CD8-positive, alpha-beta T cell (primary cell): ENCODE measurements at regions of chr20 and their contacts with region 1.

Region 1: GRCh38 chr20:32249030-32249738 is 28.3 kb upstream of the KIF3B start:
- DNase-seq: peak in 6 of 9 experiments; percentile 4 to 90 (median 51)
- ATAC-seq: peak; percentile 92
- H3K4me3 ChIP-seq: no peak overlapping the region
- H3K4me3 Mint-ChIP-seq: peak overlapping the region; percentile 3
- H3K27ac ChIP-seq: peak overlapping the region in 1 of 2 experiments; percentile 19
- H3K27ac Mint-ChIP-seq: peak overlapping the region; percentile 85
- H3K4me1 ChIP-seq: peaks cover 29% of the 10 kb centered on the region
- H3K4me1 Mint-ChIP-seq: peaks cover 25% of the 10 kb centered on the region
- H3K27me3 ChIP-seq: no peaks in the 10 kb centered on the region
- H3K27me3 Mint-ChIP-seq: no peaks in the 10 kb centered on the region
- CTCF ChIP-seq: no peak

Region 2: DNA sequence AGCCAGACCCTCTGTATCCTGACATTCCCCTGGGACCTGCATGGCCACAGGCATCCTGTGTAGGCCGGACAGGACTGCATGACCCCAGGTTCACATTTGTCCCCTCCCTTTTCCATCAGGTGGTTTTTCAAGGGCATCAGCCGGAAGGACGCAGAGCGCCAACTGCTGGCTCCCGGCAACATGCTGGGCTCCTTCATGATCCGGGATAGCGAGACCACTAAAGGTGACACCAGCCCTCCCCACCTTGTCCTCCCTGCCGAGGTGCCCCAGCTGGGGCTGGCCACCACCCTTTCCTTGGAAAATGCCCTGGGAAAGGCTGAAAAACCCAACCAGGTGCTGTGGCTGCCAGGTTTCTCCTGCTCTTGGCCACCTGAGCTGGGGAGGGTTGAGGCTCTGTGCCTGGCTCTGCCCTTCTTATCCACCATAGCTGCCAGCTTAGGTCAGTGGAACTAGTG is 169.5 kb before region 1 on chr20:
- CTCF ChIA-PET with region 1: no interaction called
- POLR2A ChIA-PET with region 1: no interaction called
- intact Hi-C with region 1: no loop called
- DNase-seq: no peak
- ATAC-seq: no peak
- H3K4me3 ChIP-seq: no peak overlapping the region
- H3K4me3 Mint-ChIP-seq: no peak overlapping the region
- H3K27ac ChIP-seq: no peak overlapping the region
- H3K27ac Mint-ChIP-seq: no peak overlapping the region
- H3K4me1 ChIP-seq: no peaks in the 10 kb centered on the region
- H3K4me1 Mint-ChIP-seq: no peaks in the 10 kb centered on the region
- H3K27me3 ChIP-seq: no peaks in the 10 kb centered on the region
- H3K27me3 Mint-ChIP-seq: peaks cover 23% of the 10 kb centered on the region
- CTCF ChIP-seq: no peak

Region 3: GRCh38 chr20:32207626-32208498 is 41.3 kb before region 1 on chr20 and contains the starts of genes PLAGL2 and POFUT1:
- CTCF ChIA-PET with region 1: no interaction called
- POLR2A ChIA-PET with region 1: no interaction called
- intact Hi-C with region 1: loop called in 1 of 2 experiments (anchors 2 kb)
- DNase-seq: peak; percentile 73 to 94 (median 86)
- ATAC-seq: peak; percentile 96
- H3K4me3 ChIP-seq: peak within 1 kb of the TSS; percentile 84 to 86
- H3K4me3 Mint-ChIP-seq: peak within 1 kb of the TSS; percentile 94
- H3K27ac ChIP-seq: peak within 1 kb of the TSS; percentile 68 to 70
- H3K27ac Mint-ChIP-seq: peak within 1 kb of the TSS; percentile 92
- H3K4me1 ChIP-seq: peaks cover 53% of the 10 kb centered on the region
- H3K4me1 Mint-ChIP-seq: peaks cover 82% of the 10 kb centered on the region
- H3K27me3 ChIP-seq: no peaks in the 10 kb centered on the region
- H3K27me3 Mint-ChIP-seq: no peaks in the 10 kb centered on the region
- CTCF ChIP-seq: no peak
- total RNA-seq, gene PLAGL2: 15.8 to 16.9 TPM
- total RNA-seq, gene POFUT1: 5.1 to 6.3 TPM

Region 4: DNA sequence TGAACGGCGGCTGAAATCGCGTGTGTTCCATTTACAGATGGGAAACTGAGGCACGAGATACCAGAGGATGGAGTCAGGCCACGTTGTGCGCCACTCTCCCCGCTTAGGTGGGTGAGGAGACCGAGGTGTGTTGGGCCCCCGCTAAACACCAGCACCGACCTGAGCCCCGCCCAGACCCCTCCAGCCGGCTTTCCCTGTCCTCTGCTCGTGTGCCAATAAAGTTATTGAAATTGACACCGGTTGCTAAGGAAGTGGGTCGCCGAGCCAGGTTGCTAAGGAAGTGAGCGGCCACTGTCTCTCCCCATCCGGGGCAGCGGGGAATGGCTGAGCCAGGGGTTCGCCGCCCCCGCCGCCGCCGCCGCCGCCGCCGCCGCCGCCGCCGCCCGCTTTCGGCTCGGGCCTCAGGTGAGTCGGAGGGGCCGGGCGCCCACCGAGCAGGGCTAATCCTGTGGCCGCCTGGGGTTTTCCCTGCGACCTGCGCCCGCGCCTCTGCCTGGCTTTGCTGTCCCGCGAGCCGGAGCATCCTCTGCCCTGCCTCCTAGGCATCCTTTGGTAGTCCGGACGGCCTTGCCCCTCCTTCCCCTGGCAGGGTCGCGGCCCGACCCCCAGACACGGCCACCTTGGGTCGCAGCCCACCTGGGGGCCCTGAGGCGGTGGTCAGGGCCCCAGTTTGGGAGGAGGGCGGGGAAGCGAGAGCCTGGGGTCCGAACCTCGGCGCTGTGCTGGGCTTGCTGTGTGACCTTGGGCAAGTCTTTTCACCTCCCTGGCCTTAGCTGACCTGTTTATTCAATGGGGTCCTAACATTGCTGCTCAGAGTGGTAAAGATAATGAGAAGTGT is 28.4 kb after region 1 on chr20 and contains the start of gene KIF3B:
- CTCF ChIA-PET with region 1: no interaction called
- POLR2A ChIA-PET with region 1: no interaction called
- intact Hi-C with region 1: loop called (anchors 1 to 2 kb)
- DNase-seq: peak; percentile 68 to 94 (median 87)
- ATAC-seq: peak; percentile 85
- H3K4me3 ChIP-seq: peak within 1 kb of the TSS; percentile 91 to 97
- H3K4me3 Mint-ChIP-seq: peak within 1 kb of the TSS; percentile 90
- H3K27ac ChIP-seq: peak within 1 kb of the TSS; percentile 64 to 86
- H3K27ac Mint-ChIP-seq: peak within 1 kb of the TSS; percentile 93
- H3K4me1 ChIP-seq: peaks cover 20% of the 10 kb centered on the region
- H3K4me1 Mint-ChIP-seq: peaks cover 44% of the 10 kb centered on the region
- H3K27me3 ChIP-seq: no peaks in the 10 kb centered on the region
- H3K27me3 Mint-ChIP-seq: no peaks in the 10 kb centered on the region
- CTCF ChIP-seq: no peak
- total RNA-seq, gene KIF3B: 7.1 to 8.1 TPM

Region 5: DNA sequence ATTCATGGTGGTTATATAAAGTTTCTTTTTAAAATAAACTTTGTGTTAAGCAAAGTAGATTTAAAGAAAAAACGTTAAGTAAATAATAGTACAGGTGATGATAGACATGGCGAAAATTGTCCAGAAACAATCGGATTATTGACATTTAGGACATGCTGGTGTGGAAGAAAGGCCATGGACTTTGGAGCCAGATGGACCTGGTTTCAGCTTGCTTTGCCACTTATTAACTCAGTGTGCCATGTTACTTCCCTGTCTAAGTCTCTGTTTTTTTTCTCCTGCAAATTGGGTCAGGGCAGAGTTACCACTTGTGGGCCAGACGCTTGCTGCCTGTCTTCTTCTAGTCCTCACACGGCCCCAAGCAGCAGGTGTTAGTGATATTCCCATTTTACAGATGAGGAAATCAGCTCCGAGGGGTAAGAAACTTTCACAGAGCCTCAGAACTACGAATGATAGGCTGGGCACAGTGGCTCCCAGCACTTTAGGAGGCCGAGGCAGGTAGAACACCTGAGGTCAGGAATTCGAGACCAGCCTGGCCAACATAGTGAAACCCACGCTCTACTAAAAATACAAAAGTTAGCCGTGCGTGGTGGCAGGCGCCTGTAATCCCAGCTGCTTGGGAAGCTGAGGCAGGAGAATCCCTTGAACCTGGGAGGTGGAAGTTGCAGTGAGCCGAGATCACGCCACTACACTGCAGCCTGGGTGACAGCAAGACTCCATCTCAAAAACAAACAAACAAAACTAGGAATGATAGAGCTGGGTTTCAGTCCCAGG is 40.7 kb after region 1 on chr20:
- CTCF ChIA-PET with region 1: no interaction called
- POLR2A ChIA-PET with region 1: no interaction called
- intact Hi-C with region 1: no loop called
- DNase-seq: no peak
- ATAC-seq: no peak
- H3K4me3 ChIP-seq: no peak overlapping the region
- H3K4me3 Mint-ChIP-seq: no peak overlapping the region
- H3K27ac ChIP-seq: no peak overlapping the region
- H3K27ac Mint-ChIP-seq: no peak overlapping the region
- H3K4me1 ChIP-seq: peaks cover 20% of the 10 kb centered on the region
- H3K4me1 Mint-ChIP-seq: peaks cover 29% of the 10 kb centered on the region
- H3K27me3 ChIP-seq: no peaks in the 10 kb centered on the region
- H3K27me3 Mint-ChIP-seq: no peaks in the 10 kb centered on the region
- CTCF ChIP-seq: no peak

Region 6: DNA sequence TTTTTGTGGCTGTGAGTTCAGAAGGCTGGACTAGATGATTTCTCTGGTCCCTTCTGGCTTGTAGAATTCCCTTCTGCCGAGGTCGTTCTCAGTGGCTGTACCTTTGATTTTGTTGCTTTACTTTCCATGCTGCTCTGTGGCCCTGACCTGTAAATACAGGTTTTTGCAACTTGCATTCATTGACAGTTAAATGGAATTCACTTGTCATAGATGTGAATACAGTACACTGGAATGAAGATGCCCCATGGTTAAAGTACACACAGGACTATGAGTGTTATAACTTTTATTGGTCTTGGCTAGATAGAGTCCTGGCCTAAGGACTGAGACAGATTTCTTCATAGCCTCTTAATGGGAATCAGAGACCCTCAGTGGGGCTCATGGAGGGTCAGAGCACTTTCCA is 596.6 kb after region 1 on chr20:
- CTCF ChIA-PET with region 1: no interaction called
- POLR2A ChIA-PET with region 1: no interaction called
- intact Hi-C with region 1: no loop called
- DNase-seq: no peak
- ATAC-seq: no peak
- H3K4me3 ChIP-seq: no peak overlapping the region
- H3K4me3 Mint-ChIP-seq: no peak overlapping the region
- H3K27ac ChIP-seq: no peak overlapping the region
- H3K27ac Mint-ChIP-seq: no peak overlapping the region
- H3K4me1 ChIP-seq: peaks cover 13% of the 10 kb centered on the region
- H3K4me1 Mint-ChIP-seq: peaks cover 41% of the 10 kb centered on the region
- H3K27me3 ChIP-seq: no peaks in the 10 kb centered on the region
- H3K27me3 Mint-ChIP-seq: no peaks in the 10 kb centered on the region
- CTCF ChIP-seq: no peak